CD8-positive, alpha-beta T cell (primary cell): ENCODE measurements at regions of chr5 and their contacts with region 1.

Region 1: GRCh38 chr5:73540192-73540591 is 25.2 kb downstream of the ANKRA2 start:
- DNase-seq: no peak
- ATAC-seq: no peak
- H3K4me3 ChIP-seq: no peak overlapping the region
- H3K4me3 Mint-ChIP-seq: no peak overlapping the region
- H3K27ac ChIP-seq: no peak overlapping the region
- H3K27ac Mint-ChIP-seq: no peak overlapping the region
- H3K4me1 ChIP-seq: no peaks in the 10 kb centered on the region
- H3K4me1 Mint-ChIP-seq: no peaks in the 10 kb centered on the region
- H3K27me3 ChIP-seq: peaks cover 0 to 8% of the 10 kb centered on the region in 2 experiments
- H3K27me3 Mint-ChIP-seq: peaks cover 24% of the 10 kb centered on the region
- CTCF ChIP-seq: no peak

Region 2: DNA sequence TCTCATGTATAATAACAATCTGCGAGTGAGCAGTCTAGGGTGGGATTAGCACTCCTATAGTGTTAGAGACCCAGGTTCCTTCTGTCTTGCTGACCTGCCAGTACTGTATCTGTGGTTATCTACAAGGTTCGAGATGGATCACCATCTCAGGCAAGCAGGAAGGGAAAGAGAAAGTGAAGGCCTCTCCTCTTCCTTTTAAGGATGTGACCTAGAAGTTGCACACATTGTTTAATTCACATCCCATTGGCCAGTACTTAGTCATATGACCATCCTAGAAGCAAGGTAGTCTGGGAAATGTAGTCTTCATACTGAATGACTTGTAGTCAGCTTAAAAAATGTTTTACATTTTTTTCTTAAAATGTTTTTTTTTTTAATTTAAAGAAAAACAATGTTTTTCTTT is 1652.5 kb before region 1 on chr5:
- CTCF ChIA-PET with region 1: no interaction called
- POLR2A ChIA-PET with region 1: no interaction called
- intact Hi-C with region 1: no loop called
- DNase-seq: peak in 2 of 9 experiments; percentile 63 to 73
- ATAC-seq: peak; percentile 95
- H3K4me3 ChIP-seq: no peak overlapping the region
- H3K4me3 Mint-ChIP-seq: no peak overlapping the region
- H3K27ac ChIP-seq: no peak overlapping the region
- H3K27ac Mint-ChIP-seq: no peak overlapping the region
- H3K4me1 ChIP-seq: no peaks in the 10 kb centered on the region
- H3K4me1 Mint-ChIP-seq: peaks cover 7% of the 10 kb centered on the region
- H3K27me3 ChIP-seq: no peaks in the 10 kb centered on the region
- H3K27me3 Mint-ChIP-seq: peaks cover 25% of the 10 kb centered on the region
- CTCF ChIP-seq: no peak

Region 3: DNA sequence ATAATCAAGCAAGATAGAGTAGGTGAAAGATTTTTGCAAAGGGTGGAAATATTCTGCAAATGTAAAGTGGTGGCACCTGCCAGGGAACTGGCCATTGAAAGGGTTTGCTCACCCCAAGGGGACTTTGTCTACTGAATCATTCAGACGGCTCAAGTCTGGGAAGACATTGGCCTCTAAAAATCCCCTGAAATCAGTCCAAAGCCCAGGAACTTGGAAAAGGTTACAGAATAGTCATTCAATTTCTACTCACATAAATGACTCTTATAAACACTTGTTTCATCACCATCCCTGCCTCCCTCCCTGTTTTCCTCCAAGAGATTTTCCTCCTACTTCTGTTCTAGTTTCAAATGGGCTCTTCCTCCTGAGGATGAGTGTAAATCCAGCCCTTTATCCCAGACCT is 1061.5 kb before region 1 on chr5:
- CTCF ChIA-PET with region 1: no interaction called
- POLR2A ChIA-PET with region 1: no interaction called
- intact Hi-C with region 1: no loop called
- DNase-seq: no peak
- ATAC-seq: no peak
- H3K4me3 ChIP-seq: no peak overlapping the region
- H3K4me3 Mint-ChIP-seq: no peak overlapping the region
- H3K27ac ChIP-seq: no peak overlapping the region
- H3K27ac Mint-ChIP-seq: no peak overlapping the region
- H3K4me1 ChIP-seq: no peaks in the 10 kb centered on the region
- H3K4me1 Mint-ChIP-seq: no peaks in the 10 kb centered on the region
- H3K27me3 ChIP-seq: no peaks in the 10 kb centered on the region
- H3K27me3 Mint-ChIP-seq: peaks cover 4% of the 10 kb centered on the region
- CTCF ChIP-seq: no peak

Region 4: DNA sequence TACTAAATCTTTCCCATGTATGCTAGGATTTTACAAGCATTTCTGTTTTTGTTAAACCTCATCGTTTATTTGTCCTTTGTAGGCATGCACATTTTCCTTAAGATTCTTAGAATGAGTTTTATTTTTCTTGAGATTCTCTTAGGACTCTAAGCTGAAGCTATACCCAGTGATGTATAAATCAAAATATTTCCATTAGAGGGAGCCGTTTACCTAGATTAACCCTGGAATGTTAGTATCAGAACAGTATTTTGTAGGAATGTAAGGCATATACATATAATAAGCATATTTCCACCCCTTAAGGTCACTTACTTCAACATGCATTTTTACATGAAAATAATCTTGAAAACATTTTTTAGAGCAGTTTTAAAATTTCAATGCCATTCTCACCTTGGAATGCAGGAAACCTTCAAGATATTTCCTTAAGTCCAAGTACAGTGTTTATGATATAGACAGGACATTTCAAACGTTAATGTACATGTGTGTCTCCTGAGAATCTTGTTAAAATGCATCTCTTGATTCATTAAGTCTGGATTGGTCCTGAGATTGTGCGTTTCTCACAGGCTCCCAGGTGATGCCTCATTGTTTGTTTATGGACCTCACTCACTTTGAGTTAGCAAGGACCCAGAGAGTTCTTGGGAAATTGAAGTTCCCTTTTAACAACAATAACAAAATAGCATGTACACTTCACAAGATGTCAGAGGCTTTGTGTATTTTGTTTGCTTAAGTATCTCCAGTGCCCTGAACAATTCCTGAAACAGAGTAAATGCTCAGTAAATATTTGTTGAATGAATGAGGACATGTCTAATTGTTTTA is 619.3 kb before region 1 on chr5:
- CTCF ChIA-PET with region 1: no interaction called
- POLR2A ChIA-PET with region 1: no interaction called
- intact Hi-C with region 1: loop called in 1 of 2 experiments (anchors 2 kb)
- DNase-seq: peak in 1 of 9 experiments; percentile 12
- ATAC-seq: no peak
- H3K4me3 ChIP-seq: no peak overlapping the region
- H3K4me3 Mint-ChIP-seq: no peak overlapping the region
- H3K27ac ChIP-seq: no peak overlapping the region
- H3K27ac Mint-ChIP-seq: no peak overlapping the region
- H3K4me1 ChIP-seq: no peaks in the 10 kb centered on the region
- H3K4me1 Mint-ChIP-seq: no peaks in the 10 kb centered on the region
- H3K27me3 ChIP-seq: no peaks in the 10 kb centered on the region
- H3K27me3 Mint-ChIP-seq: peaks cover under 1% of the 10 kb centered on the region
- CTCF ChIP-seq: no peak

Region 5: DNA sequence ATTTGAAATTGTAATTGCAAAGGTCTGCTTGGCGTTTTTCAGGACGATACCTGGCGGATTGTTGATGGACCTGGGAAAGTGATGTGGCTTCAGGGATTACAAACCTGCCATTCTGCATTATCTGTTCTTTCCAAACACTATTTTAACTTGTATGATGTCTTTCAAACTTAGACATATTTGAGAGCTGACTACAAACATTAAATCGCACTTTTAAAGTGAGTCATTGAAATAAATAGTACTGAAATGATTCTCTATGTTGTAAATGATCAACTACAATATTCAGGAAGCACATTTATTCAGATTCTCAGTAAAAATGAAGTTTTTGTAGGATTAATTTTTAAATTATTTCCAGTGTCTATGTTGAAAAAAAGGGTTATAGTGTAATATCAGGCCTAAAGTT is 452.2 kb before region 1 on chr5:
- CTCF ChIA-PET with region 1: no interaction called
- POLR2A ChIA-PET with region 1: no interaction called
- intact Hi-C with region 1: loop called in 1 of 2 experiments (anchors 2 kb)
- DNase-seq: no peak
- ATAC-seq: no peak
- H3K4me3 ChIP-seq: no peak overlapping the region
- H3K4me3 Mint-ChIP-seq: no peak overlapping the region
- H3K27ac ChIP-seq: no peak overlapping the region
- H3K27ac Mint-ChIP-seq: no peak overlapping the region
- H3K4me1 ChIP-seq: no peaks in the 10 kb centered on the region
- H3K4me1 Mint-ChIP-seq: peaks cover 2% of the 10 kb centered on the region
- H3K27me3 ChIP-seq: no peaks in the 10 kb centered on the region
- H3K27me3 Mint-ChIP-seq: peaks cover 7% of the 10 kb centered on the region
- CTCF ChIP-seq: no peak

Region 6: GRCh38 chr5:73215891-73216610 is 324.1 kb before region 1 on chr5:
- CTCF ChIA-PET with region 1: interaction called, 8 read pairs
- POLR2A ChIA-PET with region 1: no interaction called
- intact Hi-C with region 1: loop called in 1 of 2 experiments (anchors 2 kb)
- DNase-seq: peak; percentile 36 to 77 (median 56)
- ATAC-seq: peak; percentile 95
- H3K4me3 ChIP-seq: peak overlapping the region; percentile 13 to 39
- H3K4me3 Mint-ChIP-seq: peak overlapping the region; percentile 69
- H3K27ac ChIP-seq: no peak overlapping the region
- H3K27ac Mint-ChIP-seq: no peak overlapping the region
- H3K4me1 ChIP-seq: peaks cover 9% of the 10 kb centered on the region
- H3K4me1 Mint-ChIP-seq: peaks cover 11% of the 10 kb centered on the region
- H3K27me3 ChIP-seq: peaks cover 15 to 27% of the 10 kb centered on the region in 2 experiments
- H3K27me3 Mint-ChIP-seq: peaks cover 76% of the 10 kb centered on the region
- CTCF ChIP-seq: peak; percentile 65

Region 7: DNA sequence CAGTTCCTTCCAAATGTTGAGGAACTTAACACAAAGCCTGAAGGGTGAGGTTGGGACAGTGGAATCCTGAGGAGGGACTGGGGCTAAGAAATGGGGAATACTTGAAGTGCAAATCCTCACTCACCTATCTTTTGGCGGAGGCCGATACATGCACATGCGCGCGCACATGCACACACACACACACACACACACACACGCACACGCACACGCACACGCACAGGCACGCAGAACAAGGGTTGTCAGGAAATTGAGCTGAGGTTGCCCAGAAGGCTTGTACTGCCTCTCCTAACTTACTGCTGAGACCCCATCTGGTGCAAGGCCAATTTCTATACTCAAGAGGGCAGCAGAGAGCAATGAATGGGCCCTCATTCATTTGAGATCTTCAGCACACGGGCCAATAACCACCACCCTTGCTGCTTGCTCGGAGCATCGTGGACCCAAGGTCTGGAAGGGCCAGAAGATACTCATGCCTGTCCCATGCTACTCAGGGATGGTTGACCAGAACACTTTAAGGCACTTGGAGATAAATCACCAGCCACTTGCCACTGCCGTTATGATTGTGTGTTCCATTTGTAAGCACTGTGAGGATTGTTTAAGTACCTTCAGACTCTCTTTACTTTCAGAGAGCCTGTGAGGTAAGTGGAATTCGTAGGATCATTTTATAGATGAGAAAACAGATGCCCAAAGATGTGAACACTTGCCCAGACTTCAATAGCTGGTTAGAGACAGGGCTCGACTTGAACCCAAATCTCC is 20.5 kb before region 1 on chr5:
- CTCF ChIA-PET with region 1: interaction called, 69 read pairs
- POLR2A ChIA-PET with region 1: interaction called, 3 read pairs
- intact Hi-C with region 1: loop called (anchors 1 kb)
- DNase-seq: peak; percentile 40 to 87 (median 67)
- ATAC-seq: peak; percentile 99
- H3K4me3 ChIP-seq: no peak overlapping the region
- H3K4me3 Mint-ChIP-seq: peak overlapping the region; percentile 42
- H3K27ac ChIP-seq: no peak overlapping the region
- H3K27ac Mint-ChIP-seq: no peak overlapping the region
- H3K4me1 ChIP-seq: no peaks in the 10 kb centered on the region
- H3K4me1 Mint-ChIP-seq: peaks cover 7% of the 10 kb centered on the region
- H3K27me3 ChIP-seq: no peaks in the 10 kb centered on the region
- H3K27me3 Mint-ChIP-seq: no peaks in the 10 kb centered on the region
- CTCF ChIP-seq: peak; percentile 61